Endothelial cell of umbilical vein (primary cell): ENCODE measurements at regions of chr17 and their contacts with region 1.

Region 1: GRCh38 chr17:41738077-41738735 is 3.8 kb upstream of the HAP1 start:
- DNase-seq: peak; percentile 81
- H3K4me3 ChIP-seq: no peak overlapping the region
- H3K27ac ChIP-seq: no peak overlapping the region
- H3K4me1 ChIP-seq: peaks cover 2% of the 10 kb centered on the region
- H3K27me3 ChIP-seq: peaks cover 27% of the 10 kb centered on the region in 2 experiments
- CTCF ChIP-seq: peak; percentile 95 to 96
- POLR2A ChIP-seq: no peak

Region 2: GRCh38 chr17:41717408-41718286 is 20.6 kb before region 1 on chr17:
- CTCF ChIA-PET with region 1: no interaction called
- POLR2A ChIA-PET with region 1: no interaction called
- dilution Hi-C with region 1: no loop called
- intact Hi-C with region 1: no loop called
- DNase-seq: peak; percentile 18
- H3K4me3 ChIP-seq: no peak overlapping the region
- H3K27ac ChIP-seq: no peak overlapping the region
- H3K4me1 ChIP-seq: no peaks in the 10 kb centered on the region
- H3K27me3 ChIP-seq: peaks cover 4 to 5% of the 10 kb centered on the region in 2 experiments
- CTCF ChIP-seq: no peak
- POLR2A ChIP-seq: no peak

Region 3: DNA sequence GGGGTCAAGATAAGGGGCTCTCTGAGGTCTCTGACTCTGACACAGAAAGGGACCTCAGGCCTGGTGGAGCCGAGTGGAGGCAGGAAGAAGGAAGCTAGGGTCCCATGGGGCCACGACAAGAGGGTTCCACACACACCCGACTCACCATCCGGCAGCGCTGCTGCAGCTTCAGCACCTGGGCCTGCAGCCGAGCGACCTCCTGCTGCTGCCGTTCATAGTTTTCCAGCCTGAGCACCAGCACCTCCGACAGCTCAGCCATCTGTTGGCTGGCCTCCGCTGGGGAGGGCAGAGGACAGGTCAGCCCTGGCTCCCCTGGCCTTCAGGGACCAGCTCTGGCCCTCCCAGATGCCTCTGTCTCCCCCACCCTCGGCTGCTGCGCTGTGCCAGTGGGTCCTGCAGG is 10.2 kb before region 1 on chr17:
- CTCF ChIA-PET with region 1: interaction called, 11 read pairs
- POLR2A ChIA-PET with region 1: no interaction called
- dilution Hi-C with region 1: no loop called
- intact Hi-C with region 1: no loop called
- DNase-seq: no peak
- H3K4me3 ChIP-seq: no peak overlapping the region
- H3K27ac ChIP-seq: no peak overlapping the region
- H3K4me1 ChIP-seq: no peaks in the 10 kb centered on the region
- H3K27me3 ChIP-seq: peaks cover 15 to 17% of the 10 kb centered on the region in 2 experiments
- CTCF ChIP-seq: no peak
- POLR2A ChIP-seq: no peak

Region 4: DNA sequence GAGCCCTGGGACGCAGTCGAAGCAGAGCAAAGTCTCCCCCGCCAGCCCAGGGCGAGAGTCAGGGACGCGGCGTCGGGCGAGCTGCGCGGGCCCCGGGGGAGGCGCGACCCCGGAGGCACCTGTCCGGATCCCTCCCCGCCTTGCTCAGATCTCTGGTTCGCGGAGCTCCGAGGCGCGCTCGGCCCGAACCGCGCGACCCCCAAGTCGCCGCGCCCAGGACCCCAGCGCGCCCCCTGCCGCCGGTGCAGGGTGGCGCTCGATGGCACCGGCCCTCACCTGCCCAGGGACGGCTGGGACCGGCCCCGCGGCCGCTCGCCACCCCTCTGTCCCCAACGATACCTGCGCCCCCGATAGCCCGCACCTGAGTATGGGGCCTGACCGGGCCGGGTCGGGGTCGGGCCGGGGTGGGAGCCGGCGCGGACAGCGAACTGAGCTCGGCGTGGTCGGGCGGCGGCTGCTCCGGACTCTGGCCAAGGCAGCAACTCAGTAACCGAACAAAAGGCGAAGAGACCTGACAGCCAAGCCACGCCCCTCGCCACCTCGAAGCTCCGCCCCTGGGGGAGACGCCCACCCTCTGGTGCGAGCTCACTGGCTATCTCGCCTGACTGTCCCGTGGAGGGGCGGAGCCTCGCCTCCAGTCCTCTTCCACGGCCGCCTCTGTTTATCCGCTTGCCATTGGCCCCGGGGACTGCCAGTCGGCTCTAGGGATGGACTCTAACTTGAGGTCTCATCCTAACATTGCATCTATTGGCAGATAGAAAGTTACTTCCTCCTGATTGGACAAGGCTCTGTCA is 48.2 kb after region 1 on chr17 and contains the start of gene JUP:
- CTCF ChIA-PET with region 1: interaction called, 13 read pairs
- POLR2A ChIA-PET with region 1: interaction called, 3 read pairs
- dilution Hi-C with region 1: no loop called
- intact Hi-C with region 1: no loop called
- DNase-seq: peak; percentile 100
- H3K4me3 ChIP-seq: peak within 1 kb of the TSS; percentile 14 to 98 (median 52)
- H3K27ac ChIP-seq: peak within 1 kb of the TSS; percentile 19
- H3K4me1 ChIP-seq: no peaks in the 10 kb centered on the region
- H3K27me3 ChIP-seq: peaks cover 0 to 7% of the 10 kb centered on the region in 2 experiments
- CTCF ChIP-seq: peak; percentile 66 to 81
- POLR2A ChIP-seq: peak; percentile 81
- total RNA-seq, gene JUP: 170 and 171 TPM in 2 replicates

Region 5: GRCh38 chr17:41811549-41812380 is 73.6 kb after region 1 on chr17 and contains the start of gene P3H4:
- CTCF ChIA-PET with region 1: interaction called, 17 read pairs
- POLR2A ChIA-PET with region 1: no interaction called
- dilution Hi-C with region 1: loop called (anchors 10 kb)
- intact Hi-C with region 1: no loop called
- DNase-seq: peak; percentile 84
- H3K4me3 ChIP-seq: peak within 1 kb of the TSS; percentile 51 to 81 (median 78)
- H3K27ac ChIP-seq: peak within 1 kb of the TSS; percentile 46
- H3K4me1 ChIP-seq: peaks cover 26% of the 10 kb centered on the region
- H3K27me3 ChIP-seq: no peaks in the 10 kb centered on the region
- CTCF ChIP-seq: peak; percentile 60 to 85
- POLR2A ChIP-seq: peak; percentile 90
- total RNA-seq, gene P3H4: 37.1 and 39.2 TPM in 2 replicates

Region 6: GRCh38 chr17:41864836-41865595 is 126.8 kb after region 1 on chr17 and contains the start of gene KLHL11:
- CTCF ChIA-PET with region 1: interaction called, 9 read pairs
- POLR2A ChIA-PET with region 1: no interaction called
- dilution Hi-C with region 1: no loop called
- intact Hi-C with region 1: loop called (anchors 1 kb)
- DNase-seq: peak; percentile 94
- H3K4me3 ChIP-seq: peak within 1 kb of the TSS; percentile 45 to 86 (median 77)
- H3K27ac ChIP-seq: peak within 1 kb of the TSS; percentile 24
- H3K4me1 ChIP-seq: peaks cover 11% of the 10 kb centered on the region
- H3K27me3 ChIP-seq: no peaks in the 10 kb centered on the region
- CTCF ChIP-seq: no peak
- POLR2A ChIP-seq: peak; percentile 95
- total RNA-seq, gene KLHL11: 11.0 and 12.6 TPM in 2 replicates

Region 7: DNA sequence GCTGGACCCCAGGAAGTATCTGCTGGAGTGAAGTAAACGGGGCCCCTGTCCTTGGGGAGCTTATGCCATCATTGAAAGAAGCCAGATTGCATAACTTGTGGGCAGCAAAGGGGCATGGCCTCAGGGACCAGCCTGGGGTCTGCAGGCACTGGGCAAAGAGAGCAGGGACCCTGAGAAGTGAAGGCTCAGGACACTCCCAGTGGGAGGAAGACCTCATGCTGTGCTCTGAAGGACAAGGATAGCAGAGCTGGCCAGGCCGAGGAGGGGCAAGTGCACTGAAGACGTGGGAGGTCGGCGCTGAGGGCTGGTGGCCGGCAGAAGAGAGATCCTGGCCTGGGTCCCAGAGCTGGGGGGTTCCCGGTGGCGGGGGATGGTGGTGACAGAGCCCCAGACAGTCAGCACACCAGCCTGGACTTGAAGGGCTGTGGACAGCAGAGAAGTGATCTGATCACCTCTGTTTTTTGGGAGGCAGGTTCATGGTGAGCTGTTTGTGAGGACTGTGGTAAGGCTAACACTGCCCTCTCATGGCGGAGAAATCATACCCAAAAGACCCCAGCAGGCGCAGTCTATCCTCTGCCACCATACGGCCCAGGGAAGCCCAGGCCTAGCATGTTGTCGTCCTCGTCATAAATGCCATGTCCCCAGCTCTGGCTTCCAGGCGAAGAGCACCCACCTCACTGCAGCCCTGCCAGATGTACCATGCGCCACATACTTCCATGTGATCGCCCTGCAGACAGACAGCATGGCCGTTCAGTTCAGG is 221.3 kb after region 1 on chr17:
- CTCF ChIA-PET with region 1: no interaction called
- POLR2A ChIA-PET with region 1: no interaction called
- dilution Hi-C with region 1: no loop called
- intact Hi-C with region 1: loop called (anchors 1 kb)
- DNase-seq: peak; percentile 36
- H3K4me3 ChIP-seq: no peak overlapping the region
- H3K27ac ChIP-seq: no peak overlapping the region
- H3K4me1 ChIP-seq: peaks cover 9% of the 10 kb centered on the region
- H3K27me3 ChIP-seq: no peaks in the 10 kb centered on the region
- CTCF ChIP-seq: peak; percentile 20 to 51
- POLR2A ChIP-seq: no peak